ENCODE measurements at regions of chr20 and their contacts with region 1.

Region 1: GRCh38 chr20:48986899-48987298 is 59.2 kb upstream of the CSE1L start:
- DNase-seq: no peak
- ATAC-seq: no peak
- H3K4me3 ChIP-seq: no peak overlapping the region
- H3K4me3 Mint-ChIP-seq: no peak overlapping the region
- H3K27ac ChIP-seq: no peak overlapping the region
- H3K27ac Mint-ChIP-seq: no peak overlapping the region
- H3K4me1 ChIP-seq: no peaks in the 10 kb centered on the region
- H3K4me1 Mint-ChIP-seq: no peaks in the 10 kb centered on the region
- H3K27me3 ChIP-seq: no peaks in the 10 kb centered on the region
- H3K27me3 Mint-ChIP-seq: no peaks in the 10 kb centered on the region

Region 2: DNA sequence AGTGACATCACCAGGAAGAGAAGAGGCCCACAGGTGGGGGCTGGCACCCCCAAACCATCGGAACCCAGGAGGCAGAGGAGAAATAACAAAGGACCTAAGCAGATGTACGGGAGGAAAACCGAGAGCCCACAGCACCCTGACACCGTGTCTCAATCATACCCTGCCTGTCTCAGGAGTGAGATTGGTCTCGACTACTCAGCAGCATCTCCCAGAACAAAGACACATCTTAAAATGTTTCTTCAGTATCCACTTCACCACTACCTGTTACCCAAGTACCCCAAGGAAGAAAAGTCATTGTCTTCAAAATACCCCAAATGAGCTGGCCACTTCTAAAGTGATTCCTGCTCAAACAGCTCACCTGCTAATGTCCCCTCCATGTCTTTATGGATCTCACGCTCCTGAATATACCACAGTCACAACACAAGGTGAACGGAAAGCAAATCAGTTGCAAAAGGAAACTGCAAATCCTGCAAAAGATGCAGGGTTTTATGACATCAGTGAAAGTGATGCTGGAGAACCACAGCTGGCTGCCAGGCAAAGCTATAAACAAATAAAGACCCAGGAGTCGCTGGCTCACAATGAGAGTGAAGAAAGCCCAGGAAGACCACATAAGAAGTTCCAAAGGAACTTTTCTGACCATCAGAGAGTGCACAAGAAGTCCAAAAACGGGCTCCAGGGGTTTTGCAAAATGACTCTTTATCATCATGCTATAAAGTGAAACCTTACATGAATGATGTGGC is 203.2 kb before region 1 on chr20:
- CTCF ChIA-PET with region 1: no interaction called
- POLR2A ChIA-PET with region 1: no interaction called
- DNase-seq: peak in 25 of 35 experiments; percentile 26 to 72 (median 44)
- ATAC-seq: peak; percentile 31 to 79 (median 34)
- H3K4me3 ChIP-seq: no peak overlapping the region
- H3K4me3 Mint-ChIP-seq: no peak overlapping the region
- H3K27ac ChIP-seq: peak overlapping the region; percentile 75
- H3K27ac Mint-ChIP-seq: no peak overlapping the region
- H3K4me1 ChIP-seq: peaks cover 0 to 72% of the 10 kb centered on the region in 2 experiments
- H3K4me1 Mint-ChIP-seq: peaks cover 19 to 41% (median 21%) of the 10 kb centered on the region in 3 donors
- H3K27me3 ChIP-seq: no peaks in the 10 kb centered on the region
- H3K27me3 Mint-ChIP-seq: no peaks in the 10 kb centered on the region

Region 3: GRCh38 chr20:48880981-48881767 is 105.7 kb before region 1 on chr20:
- CTCF ChIA-PET with region 1: no interaction called
- POLR2A ChIA-PET with region 1: interaction called in 1 of 2 experiments, 15 read pairs
- DNase-seq: no peak
- ATAC-seq: no peak
- H3K4me3 ChIP-seq: no peak overlapping the region
- H3K4me3 Mint-ChIP-seq: no peak overlapping the region
- H3K27ac ChIP-seq: no peak overlapping the region
- H3K27ac Mint-ChIP-seq: no peak overlapping the region
- H3K4me1 ChIP-seq: no peaks in the 10 kb centered on the region
- H3K4me1 Mint-ChIP-seq: no peaks in the 10 kb centered on the region
- H3K27me3 ChIP-seq: peaks cover 0 to 4% of the 10 kb centered on the region in 2 experiments
- H3K27me3 Mint-ChIP-seq: no peaks in the 10 kb centered on the region